GM12878 (cell line): ENCODE measurements at regions of chr12 and their contacts with region 1.

Region 1: GRCh38 chr12:110024051-110024450 is 24.3 kb downstream of the C12orf76 start:
- DNase-seq: no peak
- ATAC-seq: no peak
- H3K4me3 ChIP-seq: no peak overlapping the region
- H3K27ac ChIP-seq: no peak overlapping the region
- H3K4me1 ChIP-seq: no peaks in the 10 kb centered on the region
- H3K27me3 ChIP-seq: no peaks in the 10 kb centered on the region
- CTCF ChIP-seq: no peak
- EP300 ChIP-seq: no peak
- POLR2A ChIP-seq: no peak
- RAD21 ChIP-seq: no peak

Region 2: GRCh38 chr12:109828236-109828550 is 195.9 kb before region 1 on chr12:
- CTCF ChIA-PET with region 1: no interaction called
- POLR2A ChIA-PET with region 1: no interaction called
- RAD21 ChIA-PET with region 1: no interaction called
- SMC1A ChIA-PET with region 1: no interaction called
- in situ Hi-C with region 1: no loop called
- intact Hi-C with region 1: no loop called
- DNase-seq: no peak
- ATAC-seq: peak; percentile 26; the same call in 2 of the 3 replicates
- H3K4me3 ChIP-seq: no peak overlapping the region
- H3K27ac ChIP-seq: no peak overlapping the region
- H3K4me1 ChIP-seq: no peaks in the 10 kb centered on the region
- H3K27me3 ChIP-seq: peaks cover 0 to 5% of the 10 kb centered on the region in 2 experiments; a peak in 3 of 4 replicates
- CTCF ChIP-seq: no peak
- EP300 ChIP-seq: no peak
- POLR2A ChIP-seq: no peak
- RAD21 ChIP-seq: no peak

Region 3: GRCh38 chr12:109972821-109973220 is 51.2 kb before region 1 on chr12:
- CTCF ChIA-PET with region 1: no interaction called
- POLR2A ChIA-PET with region 1: no interaction called
- RAD21 ChIA-PET with region 1: no interaction called
- SMC1A ChIA-PET with region 1: no interaction called
- in situ Hi-C with region 1: no loop called
- intact Hi-C with region 1: no loop called
- DNase-seq: no peak
- ATAC-seq: no peak
- H3K4me3 ChIP-seq: no peak overlapping the region
- H3K27ac ChIP-seq: peak overlapping the region; percentile 19; the same call in 1 of the 2 replicates
- H3K4me1 ChIP-seq: peaks cover 20% of the 10 kb centered on the region
- H3K27me3 ChIP-seq: no peaks in the 10 kb centered on the region
- CTCF ChIP-seq: no peak
- EP300 ChIP-seq: no peak
- POLR2A ChIP-seq: no peak
- RAD21 ChIP-seq: no peak

Region 4: GRCh38 chr12:110776410-110776809 is 752.4 kb after region 1 on chr12:
- CTCF ChIA-PET with region 1: no interaction called
- POLR2A ChIA-PET with region 1: interaction called, 10 read pairs
- RAD21 ChIA-PET with region 1: no interaction called
- SMC1A ChIA-PET with region 1: no interaction called
- in situ Hi-C with region 1: no loop called
- intact Hi-C with region 1: no loop called
- DNase-seq: peak; percentile 96
- ATAC-seq: peak; percentile 96
- H3K4me3 ChIP-seq: 0 out of 2 replicates have a peak overlapping the region, but pooled peaks have one; percentile 41
- H3K27ac ChIP-seq: peak overlapping the region; percentile 65
- H3K4me1 ChIP-seq: peaks cover 40% of the 10 kb centered on the region
- H3K27me3 ChIP-seq: no peaks in the 10 kb centered on the region
- CTCF ChIP-seq: no peak
- EP300 ChIP-seq: no peak
- POLR2A ChIP-seq: no peak
- RAD21 ChIP-seq: 0 out of 2 replicates have a peak, but pooled peaks have one; percentile 10